CD4-positive, alpha-beta T cell (primary cell): ENCODE measurements at regions of chr14 and their contacts with region 1.

Region 1: GRCh38 chr14:77457522-77458290 is at the starts of genes AHSA1 and VIPAS39:
- DNase-seq: peak; percentile 86 to 99 (median 88)
- ATAC-seq: peak; percentile 94
- H3K4me3 ChIP-seq: peak within 1 kb of the TSS; percentile 98
- H3K4me3 Mint-ChIP-seq: peak within 1 kb of the TSS; percentile 100
- H3K27ac ChIP-seq: peak within 1 kb of the TSS; percentile 79 to 96
- H3K27ac Mint-ChIP-seq: peak within 1 kb of the TSS; percentile 90
- H3K4me1 ChIP-seq: peaks cover 31% of the 10 kb centered on the region
- H3K4me1 Mint-ChIP-seq: peaks cover 48% of the 10 kb centered on the region
- H3K27me3 ChIP-seq: no peaks in the 10 kb centered on the region
- H3K27me3 Mint-ChIP-seq: no peaks in the 10 kb centered on the region
- CTCF ChIP-seq: no peak
- total RNA-seq, gene AHSA1: 28.7 to 33.7 TPM
- total RNA-seq, gene VIPAS39: 7.6 to 8.7 TPM

Region 2: GRCh38 chr14:76812211-76813044 is 645.3 kb before region 1 on chr14 and contains the start of gene ANGEL1:
- CTCF ChIA-PET with region 1: no interaction called
- POLR2A ChIA-PET with region 1: no interaction called
- intact Hi-C with region 1: loop called in 1 of 2 experiments (anchors 5 kb)
- DNase-seq: peak; percentile 94 to 99 (median 98)
- ATAC-seq: peak; percentile 90
- H3K4me3 ChIP-seq: peak within 1 kb of the TSS; percentile 84
- H3K4me3 Mint-ChIP-seq: peak within 1 kb of the TSS; percentile 97
- H3K27ac ChIP-seq: peak within 1 kb of the TSS; percentile 67 to 85
- H3K27ac Mint-ChIP-seq: peak within 1 kb of the TSS; percentile 96
- H3K4me1 ChIP-seq: peaks cover 28% of the 10 kb centered on the region
- H3K4me1 Mint-ChIP-seq: peaks cover 35% of the 10 kb centered on the region
- H3K27me3 ChIP-seq: no peaks in the 10 kb centered on the region
- H3K27me3 Mint-ChIP-seq: no peaks in the 10 kb centered on the region
- CTCF ChIP-seq: no peak
- total RNA-seq, gene ANGEL1: 10.1 to 10.4 TPM

Region 3: DNA sequence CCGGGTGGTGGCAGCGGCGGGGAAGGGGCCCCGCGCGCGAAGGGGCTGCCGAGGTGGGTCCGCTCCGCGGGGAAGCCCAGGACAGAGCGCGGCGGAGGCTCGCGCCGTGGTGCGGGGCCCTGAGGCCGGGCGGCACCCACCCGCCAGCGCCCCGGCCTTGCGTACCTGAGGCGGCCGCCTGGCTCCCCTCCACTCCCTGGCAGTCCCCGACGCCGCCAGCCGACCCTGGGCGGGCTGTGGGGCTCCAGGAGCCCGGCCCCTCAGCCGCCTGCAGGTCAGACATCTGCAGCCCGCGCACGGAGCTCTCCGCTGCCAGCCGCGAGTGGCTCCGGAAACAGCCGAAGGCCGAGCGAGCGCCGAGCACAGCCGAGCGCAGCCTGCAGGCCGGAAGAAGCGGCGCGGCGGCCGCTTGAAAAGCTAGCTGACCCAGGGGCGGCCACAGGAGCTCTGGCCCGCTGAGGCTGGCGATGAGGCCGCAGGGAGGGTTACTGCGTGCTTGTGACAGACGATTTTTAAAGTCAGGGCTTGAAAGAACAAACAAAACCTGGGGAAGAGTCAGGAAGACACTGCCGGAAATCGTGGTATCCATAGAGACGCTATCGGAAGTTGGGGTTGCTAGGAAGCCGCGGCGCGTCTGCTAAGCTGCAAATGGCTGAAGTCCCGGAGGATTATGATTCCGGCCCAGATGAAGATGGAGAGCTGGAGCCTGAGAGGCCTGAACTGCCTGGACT is 80.8 kb before region 1 on chr14 and contains the starts of genes SAMD15 and TMED8:
- CTCF ChIA-PET with region 1: no interaction called
- POLR2A ChIA-PET with region 1: interaction called, 5 read pairs
- intact Hi-C with region 1: loop called (anchors 1 kb)
- DNase-seq: peak; percentile 61 to 93 (median 79)
- ATAC-seq: peak; percentile 96
- H3K4me3 ChIP-seq: peak within 1 kb of the TSS; percentile 78
- H3K4me3 Mint-ChIP-seq: peak within 1 kb of the TSS; percentile 95
- H3K27ac ChIP-seq: peak within 1 kb of the TSS; percentile 67 to 89
- H3K27ac Mint-ChIP-seq: peak within 1 kb of the TSS; percentile 74
- H3K4me1 ChIP-seq: peaks cover 21% of the 10 kb centered on the region
- H3K4me1 Mint-ChIP-seq: peaks cover 41% of the 10 kb centered on the region
- H3K27me3 ChIP-seq: no peaks in the 10 kb centered on the region
- H3K27me3 Mint-ChIP-seq: no peaks in the 10 kb centered on the region
- CTCF ChIP-seq: no peak
- total RNA-seq, gene SAMD15: 0.34 TPM in 1 of 2 experiments, not detected in the other
- total RNA-seq, gene TMED8: 4.9 to 5.1 TPM

Region 4: DNA sequence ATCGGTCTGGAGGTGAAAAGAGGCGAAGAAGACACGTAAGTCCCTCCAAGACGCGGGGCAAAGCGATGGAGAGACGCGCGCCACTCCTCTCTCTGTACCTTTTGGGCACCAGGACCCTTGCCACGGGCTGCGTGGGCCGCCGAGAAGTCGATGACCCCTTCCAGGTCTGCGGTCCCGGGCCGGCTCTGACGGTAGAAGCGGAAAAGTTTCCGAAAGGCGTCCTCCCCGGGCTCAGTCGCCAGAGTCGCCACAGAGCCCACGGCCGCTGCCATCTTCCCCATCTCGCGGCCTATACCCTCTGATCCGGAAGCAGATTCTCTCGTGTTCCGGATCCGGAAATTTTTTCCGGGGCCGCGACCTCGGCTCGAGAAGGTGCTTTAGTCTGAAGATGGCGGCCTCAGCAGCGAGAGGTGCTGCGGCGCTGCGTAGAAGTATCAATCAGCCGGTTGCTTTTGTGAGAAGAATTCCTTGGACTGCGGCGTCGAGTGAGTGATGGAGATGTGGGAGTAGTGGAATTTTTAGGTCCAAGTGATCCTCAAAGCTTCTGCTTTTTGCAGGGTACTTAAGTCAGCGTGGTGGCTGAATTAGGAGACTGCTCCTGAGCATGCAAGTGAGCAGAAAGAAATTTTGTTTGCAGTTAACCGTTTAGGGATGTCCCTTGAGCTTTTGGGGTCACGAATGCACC is 250.2 kb after region 1 on chr14 and contains the starts of genes ALKBH1 and SLIRP:
- CTCF ChIA-PET with region 1: interaction called, 5 read pairs
- POLR2A ChIA-PET with region 1: interaction called, 5 read pairs
- intact Hi-C with region 1: loop called (anchors 1 to 2 kb)
- DNase-seq: peak; percentile 79 to 93 (median 84)
- ATAC-seq: peak; percentile 98
- H3K4me3 ChIP-seq: peak within 1 kb of the TSS; percentile 82
- H3K4me3 Mint-ChIP-seq: peak within 1 kb of the TSS; percentile 95
- H3K27ac ChIP-seq: peak within 1 kb of the TSS; percentile 10 to 65
- H3K27ac Mint-ChIP-seq: peak within 1 kb of the TSS; percentile 87
- H3K4me1 ChIP-seq: peaks cover 19% of the 10 kb centered on the region
- H3K4me1 Mint-ChIP-seq: peaks cover 54% of the 10 kb centered on the region
- H3K27me3 ChIP-seq: no peaks in the 10 kb centered on the region
- H3K27me3 Mint-ChIP-seq: no peaks in the 10 kb centered on the region
- CTCF ChIP-seq: no peak
- total RNA-seq, gene ALKBH1: 5.6 to 8.5 TPM
- total RNA-seq, gene SLIRP: 46.8 to 49.7 TPM

Region 5: GRCh38 chr14:77799863-77800730 is 342.4 kb after region 1 on chr14 and contains the start of gene ADCK1:
- CTCF ChIA-PET with region 1: no interaction called
- POLR2A ChIA-PET with region 1: no interaction called
- intact Hi-C with region 1: loop called in 1 of 2 experiments (anchors 2 kb)
- DNase-seq: peak; percentile 62 to 90 (median 78)
- ATAC-seq: peak; percentile 90
- H3K4me3 ChIP-seq: peak within 1 kb of the TSS; percentile 67
- H3K4me3 Mint-ChIP-seq: peak within 1 kb of the TSS; percentile 85
- H3K27ac ChIP-seq: peak within 1 kb of the TSS; percentile 60 to 85
- H3K27ac Mint-ChIP-seq: peak within 1 kb of the TSS; percentile 74
- H3K4me1 ChIP-seq: peaks cover 13% of the 10 kb centered on the region
- H3K4me1 Mint-ChIP-seq: peaks cover 11% of the 10 kb centered on the region
- H3K27me3 ChIP-seq: no peaks in the 10 kb centered on the region
- H3K27me3 Mint-ChIP-seq: no peaks in the 10 kb centered on the region
- CTCF ChIP-seq: peak; percentile 38
- total RNA-seq, gene ADCK1: 7.1 to 8.7 TPM